ENCODE measurements at regions of chr19 and their contacts with region 1.

Region 1: DNA sequence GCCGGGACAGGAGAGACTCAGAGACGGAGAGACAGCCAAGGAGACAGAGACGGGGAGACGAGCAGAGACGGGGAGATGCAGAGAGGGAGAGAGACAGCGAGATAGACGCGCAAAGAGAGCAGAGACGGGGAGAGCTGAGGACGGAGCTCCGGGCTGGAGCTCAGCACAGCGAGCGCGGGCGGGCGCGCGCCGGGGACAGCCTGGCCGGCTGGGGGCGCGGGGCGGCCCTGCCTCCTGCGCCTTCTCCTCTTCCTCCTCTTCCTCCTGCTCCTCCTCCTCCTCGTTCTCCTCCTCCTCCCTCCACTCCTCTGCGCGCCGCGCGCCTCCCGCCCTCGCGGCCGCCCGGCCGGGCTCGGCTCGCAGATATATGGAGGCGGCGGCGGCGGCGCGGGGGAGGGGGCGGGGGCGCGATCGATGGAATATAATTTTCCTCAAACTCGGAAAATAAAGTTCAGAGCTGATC is at the start of gene ERFL:
- DNase-seq: no peak
- ATAC-seq: peak; percentile 13
- H3K4me3 Mint-ChIP-seq: peak within 1 kb of the TSS; percentile 72
- H3K27ac Mint-ChIP-seq: no peak within 1 kb of the TSS
- H3K4me1 Mint-ChIP-seq: peaks cover 31% of the 10 kb centered on the region
- H3K27me3 Mint-ChIP-seq: peaks cover 47% of the 10 kb centered on the region
- CTCF ChIP-seq: no peak
- total RNA-seq, gene ERFL: 0.30 to 0.66 TPM (median 0.31 TPM) in 3 replicates

Region 2: DNA sequence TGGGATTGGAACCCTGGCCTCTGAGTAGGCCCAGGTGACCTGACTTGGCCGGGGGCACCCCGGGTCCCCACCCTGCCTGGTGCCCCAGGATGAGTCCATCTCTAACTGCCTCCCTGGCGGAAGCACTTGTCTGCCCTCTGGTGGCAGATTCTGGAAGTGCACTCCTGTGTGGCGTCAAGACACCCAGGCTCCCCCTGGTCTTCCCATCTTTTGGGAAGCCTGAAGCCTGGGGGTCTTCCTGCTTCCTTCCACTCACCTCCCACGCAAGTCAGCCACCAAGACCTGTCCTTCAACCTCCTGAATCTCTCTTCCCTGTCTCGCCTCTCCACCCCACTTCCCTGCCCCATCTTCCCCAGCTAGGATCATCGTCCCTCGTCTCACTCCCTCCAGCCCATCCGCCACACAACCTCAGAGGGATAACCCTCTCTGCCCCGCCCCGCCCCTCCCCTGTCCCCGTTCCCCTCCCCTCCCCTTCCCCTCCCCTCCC is 23.5 kb after region 1 on chr19:
- CTCF ChIA-PET with region 1: interaction called, 10 read pairs
- POLR2A ChIA-PET with region 1: no interaction called
- DNase-seq: peak; percentile 97
- ATAC-seq: peak; percentile 93
- H3K4me3 Mint-ChIP-seq: peak overlapping the region; percentile 65
- H3K27ac Mint-ChIP-seq: no peak overlapping the region
- H3K4me1 Mint-ChIP-seq: no peaks in the 10 kb centered on the region
- H3K27me3 Mint-ChIP-seq: peaks cover 15% of the 10 kb centered on the region
- CTCF ChIP-seq: peak; percentile 100

Region 3: DNA sequence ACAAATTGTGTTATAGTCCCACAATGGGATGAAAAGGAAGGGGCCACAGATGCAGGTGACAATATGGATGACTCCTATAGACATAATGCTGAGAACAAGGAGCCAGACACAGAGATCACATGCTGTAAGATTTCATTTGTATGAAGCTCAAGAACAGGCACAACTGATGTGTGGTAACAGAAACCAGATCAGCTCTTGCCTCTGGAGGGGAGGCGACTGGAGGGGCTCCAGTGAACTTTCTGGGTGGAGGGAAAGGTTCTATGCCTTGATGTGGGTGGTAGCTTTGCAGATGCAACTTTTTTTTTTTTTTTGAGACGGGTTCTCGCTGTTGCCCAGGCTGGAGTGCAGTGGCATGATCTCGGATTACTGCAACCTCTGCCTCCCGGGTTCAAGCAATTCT is 36.9 kb after region 1 on chr19:
- CTCF ChIA-PET with region 1: no interaction called
- POLR2A ChIA-PET with region 1: no interaction called
- DNase-seq: no peak
- ATAC-seq: no peak
- H3K4me3 Mint-ChIP-seq: no peak overlapping the region
- H3K27ac Mint-ChIP-seq: no peak overlapping the region
- H3K4me1 Mint-ChIP-seq: no peaks in the 10 kb centered on the region; the same call in 1 of the 2 replicates
- H3K27me3 Mint-ChIP-seq: no peaks in the 10 kb centered on the region
- CTCF ChIP-seq: no peak